RWPE1 (cell line): ENCODE measurements at regions of chr11 and their contacts with region 1.

Region 1: GRCh38 chr11:62665075-62665598 is at the starts of genes C11orf98 and CSKMT:
- DNase-seq: peak; percentile 97
- H3K27ac ChIP-seq: peak within 1 kb of the TSS; percentile 90
- CTCF ChIP-seq: no peak

Region 2: GRCh38 chr11:62461740-62462507 is 203.2 kb before region 1 on chr11:
- CTCF ChIA-PET with region 1: no interaction called
- POLR2A ChIA-PET with region 1: no interaction called
- DNase-seq: no peak
- H3K27ac ChIP-seq: peak overlapping the region; percentile 41; the same call in 1 of the 2 replicates
- CTCF ChIP-seq: no peak

Region 3: GRCh38 chr11:62472012-62472884 is 192.9 kb before region 1 on chr11:
- CTCF ChIA-PET with region 1: no interaction called
- POLR2A ChIA-PET with region 1: no interaction called
- DNase-seq: peak; percentile 64
- H3K27ac ChIP-seq: peak overlapping the region; percentile 76
- CTCF ChIP-seq: no peak

Region 4: GRCh38 chr11:62652161-62653006 is 12.8 kb before region 1 on chr11:
- CTCF ChIA-PET with region 1: interaction called, 5 read pairs
- POLR2A ChIA-PET with region 1: interaction called, 16 read pairs
- DNase-seq: no peak
- H3K27ac ChIP-seq: peak overlapping the region; percentile 91
- CTCF ChIP-seq: no peak